Naive thymus-derived CD4-positive, alpha-beta T cell (primary cell): ENCODE measurements at regions of chrX and their contacts with region 1.

Region 1: DNA sequence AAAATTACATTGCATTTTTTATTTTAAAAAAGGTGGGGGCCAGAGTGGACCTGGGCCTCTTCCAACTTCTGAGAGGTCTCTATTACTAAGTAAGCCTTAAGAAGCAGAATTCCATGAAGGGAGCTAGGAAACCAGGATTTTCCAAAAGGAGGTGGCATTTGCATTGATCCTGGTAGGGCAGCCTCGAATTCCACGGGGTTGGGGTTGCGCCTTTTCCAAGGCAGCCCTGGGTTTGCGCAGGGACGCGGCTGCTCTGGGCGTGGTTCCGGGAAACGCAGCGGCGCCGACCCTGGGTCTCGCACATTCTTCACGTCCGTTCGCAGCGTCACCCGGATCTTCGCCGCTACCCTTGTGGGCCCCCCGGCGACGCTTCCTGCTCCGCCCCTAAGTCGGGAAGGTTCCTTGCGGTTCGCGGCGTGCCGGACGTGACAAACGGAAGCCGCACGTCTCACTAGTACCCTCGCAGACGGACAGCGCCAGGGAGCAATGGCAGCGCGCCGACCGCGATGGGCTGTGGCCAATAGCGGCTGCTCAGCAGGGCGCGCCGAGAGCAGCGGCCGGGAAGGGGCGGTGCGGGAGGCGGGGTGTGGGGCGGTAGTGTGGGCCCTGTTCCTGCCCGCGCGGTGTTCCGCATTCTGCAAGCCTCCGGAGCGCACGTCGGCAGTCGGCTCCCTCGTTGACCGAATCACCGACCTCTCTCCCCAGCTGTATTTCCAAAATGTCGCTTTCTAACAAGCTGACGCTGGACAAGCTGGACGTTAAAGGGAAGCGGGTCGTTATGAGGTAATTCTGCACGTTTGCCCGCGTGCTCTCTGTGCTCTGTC is at the start of gene PGK1:
- DNase-seq: peak; percentile 76 to 96 (median 93)
- ATAC-seq: peak; percentile 97
- H3K4me3 ChIP-seq: peak within 1 kb of the TSS; percentile 98
- H3K4me3 Mint-ChIP-seq: peak within 1 kb of the TSS; percentile 89 to 99 (median 92)
- H3K27ac ChIP-seq: peak within 1 kb of the TSS; percentile 97
- H3K27ac Mint-ChIP-seq: peak within 1 kb of the TSS; percentile 90 to 97 (median 94)
- H3K4me1 ChIP-seq: peaks cover 21 to 27% of the 10 kb centered on the region in 2 donors
- H3K4me1 Mint-ChIP-seq: peaks cover 15 to 57% (median 48%) of the 10 kb centered on the region in 7 donors
- H3K27me3 ChIP-seq: no peaks in the 10 kb centered on the region
- H3K27me3 Mint-ChIP-seq: no peaks in the 10 kb centered on the region
- total RNA-seq, gene PGK1: 180 to 1,293 (median 217) TPM

Region 2: GRCh38 chrX:77910108-77910840 is 193.6 kb before region 1 on chrX and contains the start of gene ATP7A:
- CTCF ChIA-PET with region 1: no interaction called
- POLR2A ChIA-PET with region 1: interaction called, 7 read pairs
- intact Hi-C with region 1: loop called (anchors 1 to 2 kb)
- DNase-seq: peak; percentile 62 to 94 (median 88)
- ATAC-seq: peak; percentile 97
- H3K4me3 ChIP-seq: peak within 1 kb of the TSS; percentile 98
- H3K4me3 Mint-ChIP-seq: peak within 1 kb of the TSS; percentile 91 to 100 (median 96)
- H3K27ac ChIP-seq: peak within 1 kb of the TSS; percentile 93
- H3K27ac Mint-ChIP-seq: peak within 1 kb of the TSS; percentile 94 to 99 (median 98)
- H3K4me1 ChIP-seq: peaks cover 3 to 10% of the 10 kb centered on the region in 2 donors
- H3K4me1 Mint-ChIP-seq: peaks cover 6 to 28% (median 16%) of the 10 kb centered on the region in 7 donors
- H3K27me3 ChIP-seq: no peaks in the 10 kb centered on the region
- H3K27me3 Mint-ChIP-seq: no peaks in the 10 kb centered on the region
- total RNA-seq, gene ATP7A: 10.9 to 17.4 (median 17.0) TPM

Region 3: GRCh38 chrX:78035061-78035460 is 68.8 kb before region 1 on chrX:
- CTCF ChIA-PET with region 1: no interaction called
- POLR2A ChIA-PET with region 1: no interaction called
- intact Hi-C with region 1: no loop called
- DNase-seq: no peak
- ATAC-seq: no peak
- H3K4me3 ChIP-seq: no peak overlapping the region
- H3K4me3 Mint-ChIP-seq: no peak overlapping the region
- H3K27ac ChIP-seq: no peak overlapping the region
- H3K27ac Mint-ChIP-seq: no peak overlapping the region
- H3K4me1 ChIP-seq: no peaks in the 10 kb centered on the region
- H3K4me1 Mint-ChIP-seq: peaks cover 0 to 5% (median 0%) of the 10 kb centered on the region in 7 donors
- H3K27me3 ChIP-seq: no peaks in the 10 kb centered on the region
- H3K27me3 Mint-ChIP-seq: no peaks in the 10 kb centered on the region

Region 4: DNA sequence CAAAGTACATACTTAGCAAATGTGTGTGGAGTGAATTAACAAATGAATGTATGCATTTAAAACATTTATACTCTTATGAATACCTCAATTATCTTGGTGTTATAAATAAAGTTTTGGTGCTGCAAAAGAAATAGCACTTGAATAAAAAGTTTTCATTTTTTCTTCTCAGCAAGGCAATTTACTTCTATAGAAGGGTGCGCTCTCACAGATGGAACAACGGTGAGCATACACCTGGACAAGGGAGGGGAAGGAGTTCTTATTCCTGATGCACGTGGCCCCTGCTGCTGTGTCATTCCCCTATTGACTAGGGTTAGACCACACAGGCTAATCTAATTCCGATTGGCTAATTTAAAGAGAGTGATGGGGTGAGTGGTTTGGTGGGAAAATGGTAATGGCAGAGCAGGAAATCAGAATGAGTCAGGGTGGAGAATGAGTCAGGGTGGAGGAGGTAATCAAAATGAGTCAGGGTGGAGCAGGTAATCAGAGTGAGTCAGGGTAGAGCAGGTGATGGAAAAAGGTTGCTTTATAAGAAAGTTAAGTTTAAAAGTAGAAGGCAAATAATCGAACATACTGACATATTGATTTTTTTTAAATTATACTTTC is 27.9 kb before region 1 on chrX:
- CTCF ChIA-PET with region 1: no interaction called
- POLR2A ChIA-PET with region 1: interaction called, 5 read pairs
- intact Hi-C with region 1: loop called in 1 of 2 experiments (anchors 1 kb)
- DNase-seq: peak in 1 of 9 donors; percentile 20
- ATAC-seq: no peak
- H3K4me3 ChIP-seq: no peak overlapping the region
- H3K4me3 Mint-ChIP-seq: no peak overlapping the region
- H3K27ac ChIP-seq: no peak overlapping the region
- H3K27ac Mint-ChIP-seq: peak overlapping the region in 2 of 9 donors; percentile 9 to 54
- H3K4me1 ChIP-seq: no peaks in the 10 kb centered on the region
- H3K4me1 Mint-ChIP-seq: peaks cover 0 to 16% (median 12%) of the 10 kb centered on the region in 7 donors
- H3K27me3 ChIP-seq: no peaks in the 10 kb centered on the region
- H3K27me3 Mint-ChIP-seq: peaks cover 0 to 3% (median 0%) of the 10 kb centered on the region in 5 donors

Region 5: GRCh38 chrX:78182881-78183280 is 79.0 kb after region 1 on chrX:
- CTCF ChIA-PET with region 1: no interaction called
- POLR2A ChIA-PET with region 1: no interaction called
- intact Hi-C with region 1: no loop called
- DNase-seq: no peak
- ATAC-seq: no peak
- H3K4me3 ChIP-seq: no peak overlapping the region
- H3K4me3 Mint-ChIP-seq: no peak overlapping the region
- H3K27ac ChIP-seq: no peak overlapping the region
- H3K27ac Mint-ChIP-seq: no peak overlapping the region
- H3K4me1 ChIP-seq: no peaks in the 10 kb centered on the region
- H3K4me1 Mint-ChIP-seq: no peaks in the 10 kb centered on the region
- H3K27me3 ChIP-seq: no peaks in the 10 kb centered on the region
- H3K27me3 Mint-ChIP-seq: no peaks in the 10 kb centered on the region

Region 6: DNA sequence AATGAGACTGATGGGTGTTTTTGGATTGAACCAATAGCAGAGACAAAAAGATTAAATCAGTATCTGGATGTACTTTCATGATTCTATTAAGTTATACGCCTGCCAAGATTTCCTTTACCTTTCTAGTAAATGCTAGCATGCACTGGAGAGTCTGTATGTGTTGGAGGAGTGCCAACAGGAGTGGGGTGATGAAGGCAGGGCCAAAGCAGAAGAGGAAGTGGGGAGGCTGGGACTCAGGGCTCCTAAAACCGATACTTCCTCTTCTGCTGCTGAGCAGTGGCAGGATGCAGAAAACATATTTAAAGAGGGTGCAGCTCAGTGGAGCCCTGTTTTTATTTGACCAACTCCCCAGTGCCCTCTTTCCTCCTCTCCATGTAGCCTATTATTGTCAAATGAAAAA is 218.0 kb after region 1 on chrX:
- CTCF ChIA-PET with region 1: no interaction called
- POLR2A ChIA-PET with region 1: interaction called, 3 read pairs
- intact Hi-C with region 1: loop called (anchors 1 to 5 kb)
- DNase-seq: peak in 7 of 9 donors; percentile 57 to 80 (median 72)
- ATAC-seq: peak; percentile 91
- H3K4me3 ChIP-seq: no peak overlapping the region
- H3K4me3 Mint-ChIP-seq: peak overlapping the region; percentile 66 to 95 (median 75)
- H3K27ac ChIP-seq: peak overlapping the region; percentile 55
- H3K27ac Mint-ChIP-seq: peak overlapping the region; percentile 80 to 99 (median 91)
- H3K4me1 ChIP-seq: peaks cover 16 to 23% of the 10 kb centered on the region in 2 donors
- H3K4me1 Mint-ChIP-seq: peaks cover 16 to 57% (median 45%) of the 10 kb centered on the region in 7 donors
- H3K27me3 ChIP-seq: no peaks in the 10 kb centered on the region
- H3K27me3 Mint-ChIP-seq: no peaks in the 10 kb centered on the region

Region 7: DNA sequence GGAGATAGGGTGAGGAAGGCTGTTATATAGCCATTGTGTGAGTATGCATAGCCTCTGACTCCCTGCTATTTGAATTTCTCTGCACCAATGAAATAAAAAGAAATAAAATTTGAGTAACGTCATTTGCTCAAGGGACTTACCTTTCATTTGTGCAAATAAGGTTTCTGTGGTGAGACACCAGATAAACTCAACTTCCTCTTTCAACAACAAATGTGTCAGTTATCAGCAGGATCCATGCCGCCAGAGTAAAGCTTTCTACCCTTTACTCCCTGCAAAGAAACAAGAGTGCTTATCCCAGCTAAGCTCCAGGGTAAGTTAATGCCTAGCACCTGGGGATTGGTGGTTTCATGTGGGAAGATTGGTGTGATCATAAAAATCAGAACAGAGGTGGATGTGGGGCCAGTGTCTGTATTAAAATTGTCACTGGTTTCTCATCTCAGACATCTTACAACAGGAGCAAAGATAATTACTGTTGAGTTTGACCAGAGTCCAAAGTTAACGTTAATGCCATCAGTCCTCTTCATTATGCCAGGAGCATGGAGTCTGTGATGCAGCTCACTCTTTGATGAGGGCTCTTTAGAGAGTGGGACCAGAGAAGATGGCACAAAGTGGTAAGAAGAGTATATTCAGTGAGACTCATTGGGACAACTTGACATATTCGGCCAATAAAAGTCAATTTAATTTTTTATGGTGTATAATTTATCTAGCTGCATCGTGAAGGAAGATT is 841.5 kb after region 1 on chrX and contains the start of gene P2RY10:
- CTCF ChIA-PET with region 1: no interaction called
- POLR2A ChIA-PET with region 1: interaction called, 4 read pairs
- intact Hi-C with region 1: loop called (anchors 2 to 10 kb)
- DNase-seq: peak in 8 of 9 donors; percentile 21 to 82 (median 75)
- ATAC-seq: peak; percentile 92
- H3K4me3 ChIP-seq: peak within 1 kb of the TSS; percentile 81
- H3K4me3 Mint-ChIP-seq: peak within 1 kb of the TSS; percentile 86 to 99 (median 92)
- H3K27ac ChIP-seq: peak within 1 kb of the TSS; percentile 86
- H3K27ac Mint-ChIP-seq: peak within 1 kb of the TSS; percentile 94 to 99 (median 98)
- H3K4me1 ChIP-seq: peaks cover 6 to 19% of the 10 kb centered on the region in 2 donors
- H3K4me1 Mint-ChIP-seq: peaks cover 15 to 62% (median 51%) of the 10 kb centered on the region in 7 donors
- H3K27me3 ChIP-seq: no peaks in the 10 kb centered on the region
- H3K27me3 Mint-ChIP-seq: no peaks in the 10 kb centered on the region
- total RNA-seq, gene P2RY10: 47.6 to 98.5 (median 67.4) TPM

Region 8: GRCh38 chrX:79366873-79367749 is 1263.3 kb after region 1 on chrX and contains the start of gene ITM2A:
- CTCF ChIA-PET with region 1: no interaction called
- POLR2A ChIA-PET with region 1: interaction called, 5 read pairs
- intact Hi-C with region 1: loop called (anchors 1 to 10 kb)
- DNase-seq: peak; percentile 31 to 75 (median 62)
- ATAC-seq: peak; percentile 86
- H3K4me3 ChIP-seq: peak within 1 kb of the TSS; percentile 93
- H3K4me3 Mint-ChIP-seq: peak within 1 kb of the TSS; percentile 89 to 99 (median 95)
- H3K27ac ChIP-seq: peak within 1 kb of the TSS; percentile 89
- H3K27ac Mint-ChIP-seq: peak within 1 kb of the TSS; percentile 92 to 99 (median 98)
- H3K4me1 ChIP-seq: peaks cover 7 to 13% of the 10 kb centered on the region in 2 donors
- H3K4me1 Mint-ChIP-seq: peaks cover 7 to 39% (median 31%) of the 10 kb centered on the region in 7 donors
- H3K27me3 ChIP-seq: no peaks in the 10 kb centered on the region
- H3K27me3 Mint-ChIP-seq: no peaks in the 10 kb centered on the region
- total RNA-seq, gene ITM2A: 109 to 170 (median 154) TPM